GM23248 (cell line): ENCODE measurements at regions of chr3 and their contacts with region 1.

Region 1: DNA sequence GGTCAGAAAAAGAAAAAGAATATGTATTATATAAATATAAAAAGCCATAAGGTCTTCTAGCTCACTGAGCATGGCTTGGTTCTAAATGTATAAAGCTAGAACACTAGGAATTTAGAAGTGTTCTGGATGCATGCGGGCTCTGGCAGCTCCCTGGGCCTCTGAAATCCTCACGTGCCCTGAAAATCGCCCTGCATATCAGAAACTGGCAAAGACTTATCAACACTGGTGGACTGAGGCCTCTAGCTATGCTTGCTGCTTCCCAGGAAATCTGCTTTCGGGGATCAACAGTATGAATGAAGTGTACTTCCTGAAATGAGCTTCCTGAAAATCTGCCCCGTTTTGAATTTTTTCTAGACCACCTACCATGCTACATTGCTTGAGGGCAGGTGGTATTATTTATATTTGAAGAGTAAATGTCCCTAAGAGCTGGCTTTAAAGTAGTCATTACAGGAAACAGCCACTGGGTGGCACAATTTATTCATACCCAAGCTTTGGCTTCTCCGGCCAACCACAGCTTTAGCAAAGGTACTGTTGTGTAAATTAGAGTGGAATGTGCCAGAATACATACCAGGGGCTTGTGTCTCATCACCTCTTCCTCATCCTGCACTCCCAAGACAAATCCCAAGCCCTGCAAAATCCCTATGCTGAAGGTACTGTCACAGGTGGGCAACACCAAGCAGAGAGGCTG is 17.7 kb downstream of the CRTAP start:
- DNase-seq: peak; percentile 79
- H3K4me3 ChIP-seq: no peak overlapping the region
- H3K27ac ChIP-seq: no peak overlapping the region
- H3K4me1 ChIP-seq: peaks cover 9% of the 10 kb centered on the region
- H3K27me3 ChIP-seq: no peaks in the 10 kb centered on the region

Region 2: GRCh38 chr3:33372218-33373081 is 241.0 kb after region 1 on chr3:
- in situ Hi-C with region 1: loop called (anchors 5 kb)
- DNase-seq: peak; percentile 74
- H3K4me3 ChIP-seq: peak overlapping the region; percentile 58
- H3K27ac ChIP-seq: no peak overlapping the region
- H3K4me1 ChIP-seq: 0 out of 2 replicates have a peak, but pooled peaks cover 5% of the 10 kb centered on the region
- H3K27me3 ChIP-seq: no peaks in the 10 kb centered on the region

Region 3: DNA sequence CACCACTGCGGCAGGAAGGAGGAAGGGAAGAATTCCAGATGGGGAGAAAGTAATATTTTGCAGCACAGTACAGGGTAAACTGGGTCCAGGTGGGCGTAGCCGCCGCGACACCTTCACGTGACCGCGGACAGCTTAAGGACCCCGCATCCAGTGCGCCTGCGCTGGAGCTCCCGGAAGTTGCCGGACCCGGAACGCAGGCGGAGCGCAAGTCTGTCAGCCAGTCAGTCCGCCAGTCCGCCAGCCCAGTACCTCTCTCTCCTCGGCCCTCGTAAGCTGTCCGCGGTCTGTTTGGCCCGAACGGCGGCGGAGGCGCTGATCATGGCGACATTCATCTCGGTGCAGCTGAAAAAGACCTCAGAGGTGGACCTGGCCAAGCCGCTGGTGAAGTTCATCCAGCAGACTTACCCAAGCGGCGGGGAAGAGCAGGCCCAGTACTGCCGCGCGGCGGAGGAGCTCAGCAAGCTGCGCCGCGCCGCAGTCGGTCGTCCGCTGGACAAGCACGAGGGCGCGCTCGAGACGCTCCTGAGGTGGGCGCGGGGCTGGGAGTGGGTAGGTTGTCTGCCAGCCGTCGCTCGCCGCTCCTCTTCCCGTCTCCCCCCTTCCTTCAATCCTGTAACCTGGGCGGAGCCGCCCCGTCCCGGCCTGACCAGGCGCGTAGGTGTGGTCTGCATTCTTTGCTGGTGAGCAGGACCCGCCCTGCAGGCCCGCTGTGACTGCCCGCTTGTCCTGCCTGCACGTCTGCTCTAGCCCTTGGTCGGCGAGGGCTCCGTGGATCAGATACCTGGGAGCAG is 667.1 kb after region 1 on chr3 and contains the start of gene PDCD6IP:
- in situ Hi-C with region 1: loop called (anchors 25 kb)
- DNase-seq: peak; percentile 96
- H3K4me3 ChIP-seq: peak within 1 kb of the TSS; percentile 80
- H3K27ac ChIP-seq: peak within 1 kb of the TSS; percentile 93
- H3K4me1 ChIP-seq: peaks cover 37% of the 10 kb centered on the region
- H3K27me3 ChIP-seq: no peaks in the 10 kb centered on the region
- total RNA-seq, gene PDCD6IP: 180 and 214 TPM in 2 replicates